Head of caudate nucleus (tissue), 42 donors: ENCODE measurements at regions of chr11 and their contacts with region 1.

Region 1: GRCh38 chr11:20110908-20111669 is 49.2 kb downstream of the DBX1 start:
- DNase-seq: peak in 30 of 42 donors; percentile 14 to 75 (median 46)

Region 2: GRCh38 chr11:19951558-19952115 is 159.5 kb before region 1 on chr11:
- intact Hi-C with region 1: loop called (anchors 10 kb)
- DNase-seq: peak in 4 of 42 donors; percentile 13 to 58 (median 42)

Region 3: GRCh38 chr11:19962801-19963175 is 148.3 kb before region 1 on chr11:
- intact Hi-C with region 1: no loop called
- DNase-seq: no peak

Region 4: GRCh38 chr11:20097319-20098221 is 13.5 kb before region 1 on chr11:
- intact Hi-C with region 1: no loop called
- DNase-seq: peak in 2 of 42 donors; percentile 28 to 60

Region 5: GRCh38 chr11:20221566-20221965 is 110.5 kb after region 1 on chr11:
- intact Hi-C with region 1: no loop called
- DNase-seq: no peak

Region 6: GRCh38 chr11:20459865-20460264 is 348.8 kb after region 1 on chr11:
- intact Hi-C with region 1: no loop called
- DNase-seq: no peak